Caco-2 (cell line): ENCODE measurements at regions of chr1 and their contacts with region 1.

Region 1: GRCh38 chr1:15188130-15188524 is 34.6 kb downstream of the TMEM51 start:
- DNase-seq: no peak
- H3K4me3 ChIP-seq: no peak overlapping the region
- H3K4me3 Mint-ChIP-seq: no peak overlapping the region
- H3K27ac Mint-ChIP-seq: peak overlapping the region; percentile 75
- H3K4me1 ChIP-seq: peaks cover 78% of the 10 kb centered on the region
- H3K4me1 Mint-ChIP-seq: peaks cover 33% of the 10 kb centered on the region
- H3K27me3 ChIP-seq: no peaks in the 10 kb centered on the region
- H3K27me3 Mint-ChIP-seq: no peaks in the 10 kb centered on the region
- CTCF ChIP-seq: no peak

Region 2: DNA sequence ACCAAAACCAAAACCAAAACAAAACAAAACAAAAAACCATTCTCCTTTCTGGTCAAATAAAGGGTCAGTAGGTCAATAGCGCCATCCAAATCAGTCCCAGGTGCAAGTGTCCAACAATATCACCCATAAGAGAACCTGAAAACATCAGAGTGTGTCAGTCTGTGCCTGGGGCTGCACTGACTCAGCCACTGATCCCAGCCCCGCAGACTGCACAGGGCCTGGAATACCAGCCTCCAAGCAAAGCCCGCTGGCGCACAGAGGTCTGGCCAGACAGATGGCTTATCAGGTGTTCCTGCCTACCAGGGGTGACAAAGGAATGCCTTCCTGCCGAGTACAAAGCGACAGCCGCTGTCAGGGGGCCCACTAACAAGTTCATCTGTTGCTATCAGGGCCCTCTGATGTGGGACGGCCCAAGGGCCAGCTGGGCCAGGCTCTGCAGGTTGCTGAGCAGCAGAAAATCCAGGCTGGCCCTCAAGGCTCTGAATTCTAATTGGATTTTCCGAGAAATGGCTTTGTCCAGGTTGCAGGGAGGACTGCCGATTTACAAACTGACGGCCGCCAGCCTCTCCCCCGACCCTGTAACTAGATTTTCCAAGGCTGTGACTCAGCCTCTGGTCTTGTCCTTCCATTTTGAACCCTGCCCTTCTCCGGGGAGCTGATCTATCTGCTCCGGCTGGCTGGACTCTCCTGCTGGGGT is 48.3 kb before region 1 on chr1:
- CTCF ChIA-PET with region 1: no interaction called
- POLR2A ChIA-PET with region 1: no interaction called
- intact Hi-C with region 1: loop called (anchors 1 kb)
- DNase-seq: peak; percentile 88 to 93
- H3K4me3 ChIP-seq: no peak overlapping the region
- H3K4me3 Mint-ChIP-seq: no peak overlapping the region
- H3K27ac Mint-ChIP-seq: peak overlapping the region; percentile 66
- H3K4me1 ChIP-seq: peaks cover 8% of the 10 kb centered on the region
- H3K4me1 Mint-ChIP-seq: peaks cover 23% of the 10 kb centered on the region
- H3K27me3 ChIP-seq: no peaks in the 10 kb centered on the region
- H3K27me3 Mint-ChIP-seq: no peaks in the 10 kb centered on the region
- CTCF ChIP-seq: no peak

Region 3: DNA sequence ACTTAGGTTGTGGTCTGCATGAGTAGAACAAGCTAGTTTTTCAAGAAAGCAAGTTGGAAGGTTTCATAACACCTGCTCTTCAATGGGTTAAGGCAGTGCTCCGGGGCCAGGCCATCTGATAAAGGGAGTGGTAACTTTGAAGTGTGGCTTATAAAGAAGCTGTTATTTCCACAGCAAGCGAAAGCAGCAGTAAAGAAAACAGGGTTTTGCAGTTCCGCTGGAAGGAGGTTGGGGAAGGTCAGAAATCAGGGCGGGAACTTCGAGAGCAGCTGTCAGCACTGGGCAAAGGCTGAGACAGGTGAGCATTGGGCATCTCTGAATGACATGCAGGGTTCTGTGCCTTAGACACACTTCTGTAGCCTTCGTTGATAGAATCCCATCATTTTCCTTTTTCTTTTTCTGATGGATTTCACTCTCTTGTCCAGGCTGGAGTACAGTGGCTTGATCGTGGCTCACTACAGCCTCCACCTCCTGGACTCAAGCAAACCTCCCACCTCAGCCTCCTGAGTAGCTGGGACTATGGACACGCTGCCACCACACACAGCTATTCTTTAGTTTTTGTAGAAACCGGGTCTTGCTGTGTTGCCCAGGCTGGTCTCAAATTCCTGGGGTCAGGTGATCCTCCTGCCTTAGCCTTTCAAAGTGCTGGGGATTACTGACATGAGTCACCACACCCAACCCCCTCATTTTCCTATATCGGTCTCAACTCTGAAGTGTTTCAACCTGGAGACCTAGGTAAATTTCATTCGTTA is 14.1 kb before region 1 on chr1:
- CTCF ChIA-PET with region 1: interaction called, 8 read pairs
- POLR2A ChIA-PET with region 1: no interaction called
- intact Hi-C with region 1: loop called (anchors 1 kb)
- DNase-seq: peak; percentile 72 to 73
- H3K4me3 ChIP-seq: no peak overlapping the region
- H3K4me3 Mint-ChIP-seq: peak overlapping the region; percentile 50
- H3K27ac Mint-ChIP-seq: peak overlapping the region; percentile 46
- H3K4me1 ChIP-seq: peaks cover 43% of the 10 kb centered on the region
- H3K4me1 Mint-ChIP-seq: peaks cover 39% of the 10 kb centered on the region
- H3K27me3 ChIP-seq: no peaks in the 10 kb centered on the region
- H3K27me3 Mint-ChIP-seq: no peaks in the 10 kb centered on the region
- CTCF ChIP-seq: no peak